ENCODE measurements at regions of chr2 and their contacts with region 1.

Region 1: GRCh38 chr2:86764661-86765307 is 25.9 kb downstream of the CD8A start:
- DNase-seq: no peak
- H3K4me3 Mint-ChIP-seq: no peak overlapping the region
- H3K27ac Mint-ChIP-seq: no peak overlapping the region
- H3K4me1 Mint-ChIP-seq: peaks cover 19% of the 10 kb centered on the region
- H3K27me3 Mint-ChIP-seq: no peaks in the 10 kb centered on the region

Region 2: DNA sequence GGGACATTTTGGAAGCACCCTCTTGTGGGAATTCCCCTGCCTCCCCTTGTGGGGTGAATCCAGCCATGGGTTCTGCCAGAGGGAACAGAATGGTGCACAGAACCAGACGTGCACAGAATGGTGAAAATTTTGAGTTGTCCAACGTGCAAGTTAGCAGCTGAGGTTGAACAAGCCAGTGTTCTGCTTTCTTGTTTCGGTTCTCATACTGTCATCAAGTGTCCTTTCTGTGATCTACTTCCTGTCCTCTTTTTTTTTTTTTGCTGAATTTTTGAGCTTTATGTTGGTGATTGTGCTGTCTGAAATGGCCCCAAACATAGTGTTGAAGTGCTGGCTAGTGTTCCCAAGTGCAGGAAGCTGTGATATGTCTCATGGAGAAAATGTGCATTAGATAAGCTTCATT is 405.8 kb before region 1 on chr2:
- CTCF ChIA-PET with region 1: no interaction called
- POLR2A ChIA-PET with region 1: no interaction called
- intact Hi-C with region 1: no loop called
- DNase-seq: no peak
- H3K4me3 Mint-ChIP-seq: no peak overlapping the region
- H3K27ac Mint-ChIP-seq: no peak overlapping the region
- H3K4me1 Mint-ChIP-seq: no peaks in the 10 kb centered on the region
- H3K27me3 Mint-ChIP-seq: peaks cover 2% of the 10 kb centered on the region

Region 3: DNA sequence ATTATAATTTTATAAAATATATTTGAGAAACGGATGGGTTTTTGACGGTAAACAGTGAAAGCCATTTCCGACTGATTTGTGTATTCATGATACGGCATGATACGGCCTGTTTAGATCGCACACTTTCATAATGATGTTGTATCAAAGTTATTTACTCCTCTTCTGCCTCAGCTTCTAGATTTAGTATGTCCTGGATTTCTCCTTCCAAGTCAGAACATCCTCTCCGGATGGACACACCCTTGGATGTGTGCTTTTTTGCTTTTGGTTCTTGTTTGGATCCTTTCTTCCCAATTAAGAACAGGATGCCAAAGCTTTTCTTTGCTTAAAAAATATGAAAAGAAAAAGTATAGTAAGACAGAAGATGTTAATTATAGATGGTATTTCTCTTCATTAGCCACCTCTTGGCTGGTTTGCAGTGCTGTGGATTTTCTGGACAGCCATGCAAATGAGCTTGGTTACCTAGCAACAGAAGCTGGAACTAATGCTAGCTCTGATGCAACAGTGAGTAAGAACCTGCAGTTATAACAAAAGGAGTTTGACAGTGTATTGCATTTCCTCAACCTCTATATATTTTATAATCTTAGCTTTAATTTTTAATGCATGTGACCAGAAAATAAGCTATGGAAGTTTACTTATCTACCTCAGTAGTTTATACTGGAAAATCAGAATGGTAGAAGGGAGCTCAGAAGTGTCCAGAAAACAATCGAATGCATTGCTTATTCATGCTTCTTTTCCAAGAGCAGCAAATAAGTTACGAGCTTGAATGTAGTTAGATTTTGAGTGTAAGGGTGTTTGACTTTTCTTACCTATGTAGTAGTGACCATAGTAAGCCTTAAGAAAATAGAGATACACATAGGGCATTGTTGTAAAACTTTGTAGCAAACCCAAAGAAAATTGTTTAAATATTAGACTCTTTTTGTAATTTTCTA is 16.8 kb before region 1 on chr2:
- CTCF ChIA-PET with region 1: interaction called, 14 read pairs
- POLR2A ChIA-PET with region 1: no interaction called
- intact Hi-C with region 1: no loop called
- DNase-seq: peak; percentile 29
- H3K4me3 Mint-ChIP-seq: no peak overlapping the region
- H3K27ac Mint-ChIP-seq: peak overlapping the region; percentile 35
- H3K4me1 Mint-ChIP-seq: peaks cover 48% of the 10 kb centered on the region
- H3K27me3 Mint-ChIP-seq: no peaks in the 10 kb centered on the region

Region 4: DNA sequence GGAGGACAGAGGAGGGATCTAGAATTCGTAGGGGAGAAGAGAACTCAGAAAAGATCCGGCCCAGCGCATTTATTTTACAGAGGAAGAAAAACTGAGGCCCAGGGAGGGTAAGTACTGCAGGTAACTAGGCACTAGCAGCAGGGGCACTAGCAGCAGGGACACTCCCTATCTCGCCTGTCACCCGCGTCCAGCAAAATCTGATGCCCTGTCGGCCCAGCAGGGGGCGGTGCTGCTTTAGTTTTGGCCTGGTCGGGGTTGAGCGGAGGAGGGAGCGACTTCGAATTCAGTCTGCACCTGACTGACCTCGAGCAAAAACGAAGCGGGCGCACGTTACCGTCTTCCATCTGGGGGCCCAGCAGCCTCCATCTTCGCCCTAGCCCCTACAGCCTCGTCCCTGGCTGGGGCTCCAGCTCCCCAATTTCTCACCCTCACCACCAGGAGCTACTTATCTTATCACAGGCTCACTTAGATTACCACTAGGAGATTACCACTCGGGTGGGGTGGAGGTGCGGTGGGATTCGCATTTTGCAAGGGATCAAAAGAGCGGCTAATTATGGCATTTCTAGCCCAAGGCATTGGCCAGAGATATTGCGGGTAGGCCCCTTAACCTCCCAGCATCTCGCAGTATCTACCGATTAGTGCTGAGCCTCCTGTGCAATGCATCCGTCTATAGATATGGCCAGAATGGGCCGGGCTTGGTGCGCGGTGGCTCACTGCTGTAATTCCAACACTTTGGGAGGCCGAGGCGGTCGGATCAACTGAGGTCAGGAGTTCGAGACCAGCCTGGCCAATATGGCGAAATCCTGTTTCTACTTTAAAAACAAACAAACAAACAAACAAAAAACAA is 43.8 kb after region 1 on chr2:
- CTCF ChIA-PET with region 1: interaction called, 12 read pairs
- POLR2A ChIA-PET with region 1: no interaction called
- intact Hi-C with region 1: loop called (anchors 2 kb)
- DNase-seq: peak; percentile 96
- H3K4me3 Mint-ChIP-seq: peak overlapping the region; percentile 74
- H3K27ac Mint-ChIP-seq: no peak overlapping the region
- H3K4me1 Mint-ChIP-seq: peaks cover 22% of the 10 kb centered on the region
- H3K27me3 Mint-ChIP-seq: peaks cover 41% of the 10 kb centered on the region

Region 5: GRCh38 chr2:86831537-86831936 is 66.8 kb after region 1 on chr2:
- CTCF ChIA-PET with region 1: no interaction called
- POLR2A ChIA-PET with region 1: no interaction called
- intact Hi-C with region 1: no loop called
- DNase-seq: no peak
- H3K4me3 Mint-ChIP-seq: no peak overlapping the region
- H3K27ac Mint-ChIP-seq: no peak overlapping the region
- H3K4me1 Mint-ChIP-seq: peaks cover 6% of the 10 kb centered on the region
- H3K27me3 Mint-ChIP-seq: peaks cover 17% of the 10 kb centered on the region